ENCODE measurements at regions of chr22 and their contacts with region 1.

Region 1: DNA sequence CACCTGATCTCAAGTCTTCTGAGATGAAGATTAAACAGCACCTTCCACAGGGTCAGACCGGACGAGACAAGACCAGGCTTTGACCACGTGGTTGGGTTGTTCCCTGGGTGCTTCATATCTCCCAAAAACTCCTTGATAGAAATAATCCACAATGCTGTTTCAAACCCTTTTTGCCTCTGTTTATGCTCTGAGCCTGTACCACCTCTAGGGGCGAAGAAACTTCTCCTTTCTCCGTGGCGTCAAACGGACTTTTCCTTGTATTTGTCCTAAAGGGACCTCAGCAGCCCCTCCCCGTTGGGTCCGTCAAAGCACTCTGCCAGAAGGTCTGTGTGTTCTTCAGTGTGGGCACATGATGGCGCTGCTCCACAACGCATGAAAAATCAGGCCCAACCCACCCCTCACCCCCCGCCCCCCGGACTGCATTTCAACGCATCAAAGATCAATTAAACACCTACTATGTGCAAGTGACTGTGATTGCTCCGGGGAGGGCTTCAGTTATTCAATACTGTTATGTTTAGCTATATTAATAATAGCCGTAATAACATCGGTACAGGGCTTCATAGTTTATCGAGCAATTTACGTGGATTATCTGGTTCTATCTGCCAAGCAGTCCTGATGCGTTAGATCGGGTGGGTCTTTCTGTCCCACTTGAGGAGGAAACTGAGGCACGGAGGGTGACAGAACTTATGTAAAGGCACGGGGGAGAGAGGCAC is 17.3 kb upstream of the EIF3D start:
- DNase-seq: peak in 1 of 2 donors; percentile 25
- ATAC-seq: peak in 7 of 8 donors; percentile 57 to 71 (median 64)
- H3K4me3 ChIP-seq: no peak overlapping the region
- H3K27ac ChIP-seq: no peak overlapping the region
- H3K4me1 ChIP-seq: peaks cover 0 to 5% (median 0%) of the 10 kb centered on the region in 9 donors
- H3K27me3 ChIP-seq: peaks cover 5 to 49% (median 29%) of the 10 kb centered on the region in 7 donors
- CTCF ChIP-seq: peak in 8 of 9 donors; percentile 33 to 72 (median 62)

Region 2: DNA sequence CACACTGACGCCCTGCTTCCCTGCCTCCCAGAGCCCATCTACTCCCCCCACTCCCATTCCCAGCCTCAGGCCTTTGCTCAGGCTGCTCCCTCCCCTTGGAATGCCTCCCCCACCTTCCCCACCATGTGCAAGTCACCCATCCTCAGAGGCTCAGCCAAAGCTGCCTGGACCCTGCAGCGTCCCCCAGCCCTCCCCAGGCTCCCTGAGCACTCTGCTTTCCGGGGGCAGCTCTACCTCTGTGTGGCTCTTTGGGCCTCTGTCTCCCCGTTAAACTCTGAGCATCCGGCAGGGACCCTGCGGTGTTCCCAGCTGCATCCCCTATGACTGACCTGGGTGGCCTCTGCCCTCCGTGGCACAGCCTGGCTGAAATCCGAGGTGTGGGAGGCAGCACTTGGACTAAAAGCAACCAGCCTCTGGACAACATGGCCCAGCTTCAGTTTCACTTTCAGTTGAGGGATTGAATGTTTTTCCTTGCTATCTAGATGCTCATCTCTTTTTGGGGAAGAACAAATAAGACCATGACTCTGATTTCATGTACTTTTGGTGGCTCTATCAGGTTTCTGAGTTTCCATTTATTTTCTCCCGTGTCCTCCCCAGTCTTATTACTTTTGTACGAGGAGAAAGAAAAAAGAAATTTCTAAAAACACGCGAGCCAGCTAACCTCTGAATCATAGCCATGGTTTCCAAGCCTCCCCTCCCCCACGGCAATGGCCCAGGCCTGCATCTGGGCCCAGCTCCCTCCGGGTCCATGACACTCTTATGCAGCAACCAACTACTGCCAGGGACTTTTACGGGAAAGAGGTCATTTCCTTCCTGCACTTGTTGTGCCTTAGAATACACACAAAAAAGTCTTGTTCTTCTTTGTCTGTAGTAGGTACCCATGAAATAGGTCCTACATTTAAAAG is 389.5 kb before region 1 on chr22:
- intact Hi-C with region 1: no loop called
- DNase-seq: peak; percentile 82 to 94
- ATAC-seq: peak; percentile 78 to 90 (median 84)
- H3K4me3 ChIP-seq: peak overlapping the region; percentile 26 to 69 (median 63)
- H3K27ac ChIP-seq: peak overlapping the region; percentile 88 to 95 (median 94)
- H3K4me1 ChIP-seq: peaks cover 10 to 98% (median 84%) of the 10 kb centered on the region in 9 donors
- H3K27me3 ChIP-seq: no peaks in the 10 kb centered on the region
- CTCF ChIP-seq: no peak

Region 3: DNA sequence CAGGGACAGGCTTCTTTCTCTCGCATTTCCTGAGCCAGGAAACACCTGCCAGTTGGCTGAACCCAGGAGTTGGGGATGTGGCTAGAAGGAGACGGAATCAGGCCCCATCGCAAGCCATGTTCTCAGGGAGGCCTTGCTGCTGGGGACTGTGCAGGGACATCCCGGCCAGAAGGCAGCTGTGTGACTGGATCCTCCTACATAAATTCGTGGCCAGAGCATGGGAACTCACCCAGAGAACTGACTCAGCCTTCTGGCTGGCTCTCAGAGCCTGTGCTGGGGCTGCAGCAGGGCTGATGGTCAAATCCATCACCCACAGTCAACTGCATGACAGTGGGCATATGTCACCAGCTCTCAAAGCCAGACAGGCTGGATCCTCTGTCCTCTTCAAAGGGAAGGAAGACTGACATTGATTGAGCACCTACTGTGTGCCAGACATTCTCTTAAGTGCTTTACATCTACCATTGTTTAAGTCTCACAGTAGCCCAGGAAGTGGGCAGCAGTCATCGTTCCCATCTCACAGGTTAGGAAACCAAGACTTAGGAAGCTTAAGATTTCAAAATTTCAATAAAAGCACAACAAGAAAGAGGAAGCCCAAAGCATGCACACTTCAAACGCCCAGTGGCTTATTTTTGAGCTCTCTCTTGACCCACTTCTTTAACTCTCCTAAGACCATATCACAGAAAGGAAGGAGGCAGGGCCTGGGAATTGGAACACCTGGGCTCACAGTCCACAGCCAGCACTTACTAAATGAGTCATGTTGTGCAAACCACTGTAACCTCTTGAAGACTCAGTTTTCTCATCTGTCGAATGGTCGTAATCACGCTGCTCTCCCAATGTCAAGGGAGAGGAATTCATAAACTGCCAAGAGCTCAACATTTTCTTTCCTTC is 188.2 kb after region 1 on chr22:
- intact Hi-C with region 1: no loop called
- DNase-seq: no peak
- ATAC-seq: peak in 3 of 8 donors; percentile 44 to 58 (median 46)
- H3K4me3 ChIP-seq: no peak overlapping the region
- H3K27ac ChIP-seq: no peak overlapping the region
- H3K4me1 ChIP-seq: peaks cover 0 to 11% (median 0%) of the 10 kb centered on the region in 9 donors
- H3K27me3 ChIP-seq: peaks cover 0 to 50% (median 34%) of the 10 kb centered on the region in 7 donors
- CTCF ChIP-seq: no peak

Region 4: GRCh38 chr22:36762687-36763260 is 216.5 kb after region 1 on chr22:
- intact Hi-C with region 1: loop called in 2 of 10 experiments (anchors 10 kb)
- DNase-seq: peak; percentile 57 to 70
- ATAC-seq: peak in 7 of 8 donors; percentile 43 to 85 (median 78)
- H3K4me3 ChIP-seq: no peak overlapping the region
- H3K27ac ChIP-seq: no peak overlapping the region
- H3K4me1 ChIP-seq: peaks cover 0 to 9% (median 3%) of the 10 kb centered on the region in 9 donors
- H3K27me3 ChIP-seq: no peaks in the 10 kb centered on the region
- CTCF ChIP-seq: no peak

Region 5: DNA sequence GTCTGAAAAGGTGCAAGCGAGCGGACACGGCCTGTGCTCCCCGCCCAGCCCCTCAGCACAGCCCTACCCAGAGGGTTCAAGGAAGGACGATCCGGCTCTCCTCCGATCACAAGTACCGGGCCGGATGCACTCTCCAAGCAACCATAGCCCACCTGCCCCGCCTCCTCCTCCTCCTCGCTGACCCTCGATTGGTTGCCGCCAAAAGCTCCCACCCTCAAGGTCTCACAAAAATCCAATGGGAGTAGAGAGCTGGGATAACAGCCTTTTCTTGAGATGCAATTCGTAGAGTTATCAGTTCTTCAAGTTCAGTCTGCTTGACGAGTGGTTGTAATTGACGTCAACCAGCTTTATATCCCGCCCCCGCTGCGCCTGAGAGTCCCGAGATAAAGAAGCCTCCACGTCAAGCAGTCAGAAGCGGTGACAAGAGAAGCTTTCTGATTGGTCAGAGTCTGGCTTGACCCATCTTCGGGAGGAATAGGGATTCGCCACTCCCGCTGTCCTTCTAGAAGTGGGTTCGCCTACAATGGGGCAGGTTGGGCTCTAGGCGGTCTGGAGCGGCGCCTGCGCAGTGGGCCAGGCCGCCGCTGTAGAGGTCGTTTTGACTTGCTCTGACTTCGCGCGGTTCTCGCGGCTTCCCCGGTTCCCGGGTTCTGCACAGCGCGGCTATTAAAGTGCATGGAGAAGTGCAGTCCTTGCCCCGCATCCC is 229.9 kb after region 1 on chr22 and contains the start of gene IFT27:
- intact Hi-C with region 1: loop called in 6 of 10 experiments (anchors 5 to 10 kb)
- DNase-seq: peak; percentile 93 to 100
- ATAC-seq: peak; percentile 97 to 99 (median 98)
- H3K4me3 ChIP-seq: peak within 1 kb of the TSS; percentile 71 to 98 (median 92)
- H3K27ac ChIP-seq: peak within 1 kb of the TSS in 9 of 10 donors; percentile 83 to 92 (median 88)
- H3K4me1 ChIP-seq: peaks cover 0 to 18% (median 15%) of the 10 kb centered on the region in 9 donors
- H3K27me3 ChIP-seq: no peaks in the 10 kb centered on the region
- CTCF ChIP-seq: no peak
- total RNA-seq, gene IFT27: 20.8 to 34.4 (median 26.3) TPM

Region 6: DNA sequence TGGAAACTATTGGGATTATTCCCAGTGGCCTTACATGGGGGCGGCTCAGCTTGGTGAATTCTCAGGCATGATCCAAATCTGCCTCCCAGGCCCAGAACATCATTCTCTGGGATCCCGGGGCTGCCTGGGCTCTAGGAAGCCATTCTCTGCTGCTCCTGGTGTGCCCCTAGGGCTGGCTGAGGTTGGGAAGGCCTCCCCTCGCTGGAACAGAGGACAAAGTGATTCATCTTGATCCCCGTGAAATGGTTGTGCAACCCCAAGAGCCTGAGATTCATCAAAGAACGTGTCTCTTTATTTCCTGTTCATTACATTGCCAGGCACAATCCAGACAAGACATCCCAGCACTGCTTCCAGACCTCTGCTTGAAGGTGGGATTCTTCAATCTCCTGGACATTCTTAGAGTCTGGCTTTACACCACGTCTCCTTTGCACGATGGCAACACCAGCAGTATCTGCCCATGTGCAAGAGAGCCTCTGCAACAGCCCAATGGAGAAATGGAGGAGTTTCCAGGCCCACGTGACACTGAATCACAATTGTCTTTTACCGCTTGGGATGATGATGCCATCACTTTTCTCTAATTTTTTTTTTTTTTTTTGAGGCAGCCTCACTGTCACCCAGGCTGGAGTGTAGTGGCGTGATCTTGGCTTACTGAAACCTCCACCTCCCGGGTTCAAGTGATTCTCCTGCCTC is 420.7 kb after region 1 on chr22:
- intact Hi-C with region 1: no loop called
- DNase-seq: no peak
- ATAC-seq: no peak
- H3K4me3 ChIP-seq: no peak overlapping the region
- H3K27ac ChIP-seq: no peak overlapping the region
- H3K4me1 ChIP-seq: peaks cover 0 to 9% (median 0%) of the 10 kb centered on the region in 9 donors
- H3K27me3 ChIP-seq: peaks cover 0 to 7% (median 0%) of the 10 kb centered on the region in 7 donors
- CTCF ChIP-seq: no peak

Region 7: DNA sequence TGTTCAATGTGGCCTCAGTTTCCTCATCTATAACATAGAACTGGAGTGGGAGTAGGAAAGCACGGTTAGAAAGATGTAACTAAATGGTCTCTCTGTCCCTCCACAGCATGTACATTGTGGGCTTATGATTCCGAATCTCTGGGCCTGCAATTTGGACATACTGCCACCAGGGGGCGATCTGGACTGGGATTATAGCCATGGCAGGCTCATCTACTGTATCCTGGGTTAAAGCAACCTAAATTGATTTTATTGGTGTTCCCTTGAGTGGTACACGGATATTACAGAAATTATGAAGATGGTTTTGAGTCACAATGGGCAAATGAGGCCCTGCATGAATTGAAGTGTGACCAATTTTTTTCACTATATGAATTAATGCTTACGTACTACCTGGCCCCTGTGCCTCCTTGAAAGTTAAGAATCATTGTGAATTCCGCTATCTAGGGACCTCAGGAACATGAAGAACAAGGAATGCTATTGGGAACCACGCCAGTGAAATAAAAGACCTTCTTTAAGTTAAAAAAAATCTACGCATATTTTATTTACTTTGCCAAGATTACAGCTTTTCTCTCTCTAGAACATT is 440.1 kb after region 1 on chr22:
- intact Hi-C with region 1: loop called in 1 of 10 experiments (anchors 10 kb)
- DNase-seq: no peak
- ATAC-seq: no peak
- H3K4me3 ChIP-seq: no peak overlapping the region
- H3K27ac ChIP-seq: no peak overlapping the region
- H3K4me1 ChIP-seq: no peaks in the 10 kb centered on the region
- H3K27me3 ChIP-seq: peaks cover 0 to 51% (median 40%) of the 10 kb centered on the region in 7 donors
- CTCF ChIP-seq: peak; percentile 31 to 56 (median 39)